Caco-2 (cell line): ENCODE measurements at regions of chr1 and their contacts with region 1.

Region 1: DNA sequence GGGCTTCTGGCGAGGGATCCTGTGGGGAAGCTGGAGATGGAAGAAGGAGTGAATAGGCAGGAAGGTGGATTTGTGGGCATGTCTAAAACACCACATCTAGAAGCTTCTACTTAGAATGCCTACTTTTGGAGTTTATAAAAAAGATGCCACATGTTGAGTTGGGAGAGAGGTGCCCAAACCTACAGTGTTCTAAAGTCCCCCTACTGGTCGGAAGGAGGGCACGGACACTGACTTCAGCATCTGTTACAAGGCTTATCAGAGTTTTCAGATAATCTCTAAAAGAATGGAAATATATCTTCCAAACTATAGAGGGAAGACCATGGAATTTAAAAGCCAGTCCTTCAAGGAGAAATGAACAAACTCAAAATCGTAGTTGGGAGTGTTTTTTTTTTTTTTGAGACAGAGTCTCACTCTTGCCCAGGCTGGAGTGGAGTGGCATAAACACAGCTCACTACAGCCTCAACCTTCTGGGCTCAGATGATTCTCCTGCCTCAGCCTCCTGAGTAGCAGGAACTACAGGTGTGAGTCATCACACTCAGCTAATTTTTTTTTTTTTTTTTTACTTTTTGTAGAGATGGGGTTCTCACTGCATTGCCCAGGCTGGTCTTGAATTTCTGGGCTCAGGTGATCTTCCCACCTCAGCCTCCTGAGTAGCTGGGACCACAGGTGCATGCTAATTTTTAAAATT is 14.8 kb downstream of the IBA57 start:
- DNase-seq: peak in 1 of 2 experiments; percentile 9
- H3K4me3 ChIP-seq: no peak overlapping the region
- H3K4me3 Mint-ChIP-seq: no peak overlapping the region
- H3K27ac Mint-ChIP-seq: no peak overlapping the region
- H3K4me1 ChIP-seq: no peaks in the 10 kb centered on the region
- H3K4me1 Mint-ChIP-seq: no peaks in the 10 kb centered on the region
- H3K27me3 ChIP-seq: no peaks in the 10 kb centered on the region
- H3K27me3 Mint-ChIP-seq: no peaks in the 10 kb centered on the region
- CTCF ChIP-seq: peak in 1 of 2 experiments; percentile 56

Region 2: GRCh38 chr1:228131766-228132165 is 48.6 kb before region 1 on chr1:
- CTCF ChIA-PET with region 1: no interaction called
- POLR2A ChIA-PET with region 1: no interaction called
- intact Hi-C with region 1: loop called (anchors 5 kb)
- DNase-seq: peak in 1 of 2 experiments; percentile 29
- H3K4me3 ChIP-seq: no peak overlapping the region
- H3K4me3 Mint-ChIP-seq: peak overlapping the region; percentile 90
- H3K27ac Mint-ChIP-seq: peak overlapping the region; percentile 90
- H3K4me1 ChIP-seq: peaks cover 12% of the 10 kb centered on the region
- H3K4me1 Mint-ChIP-seq: no peaks in the 10 kb centered on the region
- H3K27me3 ChIP-seq: no peaks in the 10 kb centered on the region
- H3K27me3 Mint-ChIP-seq: no peaks in the 10 kb centered on the region
- CTCF ChIP-seq: no peak